ENCODE measurements at regions of chr17 and their contacts with region 1.

Region 1: GRCh38 chr17:7394452-7395191 is at the start of gene PLSCR3:
- DNase-seq: peak; percentile 89 to 92
- ATAC-seq: peak; percentile 89 to 91 (median 90)
- H3K4me3 ChIP-seq: peak within 1 kb of the TSS; percentile 95
- H3K27ac ChIP-seq: peak within 1 kb of the TSS; percentile 91
- H3K4me1 ChIP-seq: no peaks in the 10 kb centered on the region
- H3K27me3 ChIP-seq: no peaks in the 10 kb centered on the region
- CTCF ChIP-seq: no peak
- total RNA-seq, gene PLSCR3: 13.9 to 16.2 (median 15.1) TPM

Region 2: GRCh38 chr17:7444682-7445618 is 50.3 kb after region 1 on chr17 and contains the start of gene CHRNB1:
- intact Hi-C with region 1: loop called in 1 of 2 experiments (anchors 5 kb)
- DNase-seq: peak; percentile 93 to 95
- ATAC-seq: peak; percentile 85 to 89 (median 87)
- H3K4me3 ChIP-seq: peak within 1 kb of the TSS; percentile 92
- H3K27ac ChIP-seq: peak within 1 kb of the TSS; percentile 100
- H3K4me1 ChIP-seq: peaks cover 34% of the 10 kb centered on the region
- H3K27me3 ChIP-seq: peaks cover 0 to 7% (median 0%) of the 10 kb centered on the region in 3 donors
- CTCF ChIP-seq: peak; percentile 10
- total RNA-seq, gene CHRNB1: 107 to 190 (median 147) TPM

Region 3: GRCh38 chr17:7610641-7611040 is 216.0 kb after region 1 on chr17:
- intact Hi-C with region 1: no loop called
- DNase-seq: no peak
- ATAC-seq: no peak
- H3K4me3 ChIP-seq: no peak overlapping the region
- H3K27ac ChIP-seq: peak overlapping the region; percentile 95
- H3K4me1 ChIP-seq: peaks cover 51% of the 10 kb centered on the region
- H3K27me3 ChIP-seq: no peaks in the 10 kb centered on the region
- CTCF ChIP-seq: no peak